T-cell (primary cell): ENCODE measurements at regions of chr1 and their contacts with region 1.

Region 1: DNA sequence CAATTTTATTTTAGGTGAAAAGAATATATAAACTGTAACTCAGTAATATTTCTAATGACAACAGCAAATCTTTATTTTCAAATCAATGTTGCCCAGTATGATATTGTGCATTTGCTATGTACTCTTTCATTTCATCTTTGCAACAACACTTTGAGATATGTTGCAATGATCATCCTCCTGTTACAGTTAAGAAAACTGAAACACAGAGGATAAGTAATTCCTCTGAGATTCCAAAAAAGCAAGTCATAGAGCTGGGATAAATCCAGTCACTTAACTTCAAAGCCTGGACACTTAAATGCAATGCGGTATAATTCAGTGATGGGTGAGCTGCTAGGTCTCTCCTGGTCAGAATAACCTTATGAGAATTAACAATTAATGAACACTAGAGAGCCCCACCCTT is 48.6 kb upstream of the EXO1 start:
- DNase-seq: no peak
- ATAC-seq: no peak
- H3K4me3 ChIP-seq: no peak overlapping the region
- H3K4me3 Mint-ChIP-seq: no peak overlapping the region
- H3K27ac ChIP-seq: no peak overlapping the region
- H3K27ac Mint-ChIP-seq: no peak overlapping the region
- H3K4me1 ChIP-seq: no peaks in the 10 kb centered on the region
- H3K4me1 Mint-ChIP-seq: no peaks in the 10 kb centered on the region
- H3K27me3 ChIP-seq: peaks cover 0 to 3% of the 10 kb centered on the region in 2 experiments
- H3K27me3 Mint-ChIP-seq: peaks cover 4 to 9% of the 10 kb centered on the region in 2 donors

Region 2: DNA sequence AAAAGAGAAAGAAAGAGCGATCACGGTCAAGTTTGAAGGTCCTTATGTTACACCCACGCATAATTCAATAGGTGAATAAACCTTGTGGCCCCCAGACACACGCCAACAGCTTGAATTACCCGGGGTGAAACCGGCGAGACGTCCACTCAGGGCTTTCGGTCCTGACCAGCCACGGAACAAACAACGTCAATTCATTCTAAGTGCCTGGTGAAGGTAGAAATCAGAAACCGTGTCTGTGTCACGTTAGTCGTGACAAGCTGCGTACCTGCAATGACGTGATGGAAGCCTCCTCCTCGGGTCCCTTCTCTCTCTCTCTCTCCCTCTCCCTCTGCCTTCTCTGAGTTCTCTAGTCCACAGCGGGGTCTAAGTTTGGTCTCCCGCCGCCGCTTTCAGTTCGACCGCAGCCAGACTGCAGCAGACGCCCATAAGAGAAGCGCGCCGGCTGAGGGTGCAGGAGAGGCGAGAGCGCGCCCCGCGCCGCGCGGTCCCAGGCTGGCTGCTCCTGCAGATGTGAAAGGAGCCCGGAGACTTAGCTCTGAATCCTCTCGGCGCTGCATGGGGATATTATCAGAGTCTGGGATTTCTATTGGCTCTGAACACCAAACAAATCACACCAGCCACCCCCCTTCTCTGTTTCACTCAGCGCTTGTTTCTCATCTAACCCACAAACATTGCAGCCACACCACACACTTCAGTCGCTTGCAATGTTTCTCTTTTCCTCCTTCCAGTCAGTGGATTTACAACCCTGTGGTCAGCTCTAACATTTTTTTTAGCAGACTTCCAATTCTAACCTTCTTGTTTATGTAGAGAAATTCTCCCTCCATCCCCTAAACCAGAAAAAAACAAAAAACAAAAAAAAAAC is 1187.6 kb before region 1 on chr1 and contains the start of gene GREM2:
- CTCF ChIA-PET with region 1: no interaction called
- POLR2A ChIA-PET with region 1: no interaction called
- DNase-seq: peak in 30 of 35 experiments; percentile 0 to 49 (median 12)
- ATAC-seq: peak; percentile 52 to 73 (median 64)
- H3K4me3 ChIP-seq: peak within 1 kb of the TSS; percentile 62
- H3K4me3 Mint-ChIP-seq: peak within 1 kb of the TSS; percentile 71 to 89 (median 88)
- H3K27ac ChIP-seq: peak within 1 kb of the TSS; percentile 50
- H3K27ac Mint-ChIP-seq: peak within 1 kb of the TSS; percentile 81 to 88
- H3K4me1 ChIP-seq: peaks cover 0 to 9% of the 10 kb centered on the region in 2 experiments
- H3K4me1 Mint-ChIP-seq: peaks cover 22 to 49% (median 42%) of the 10 kb centered on the region in 3 donors
- H3K27me3 ChIP-seq: peaks cover 6 to 15% of the 10 kb centered on the region in 2 experiments
- H3K27me3 Mint-ChIP-seq: peaks cover 15 to 32% of the 10 kb centered on the region in 2 donors
- total RNA-seq, gene GREM2: 0.23 to 2.9 (median 0.98) TPM

Region 3: GRCh38 chr1:241688940-241689368 is 110.5 kb before region 1 on chr1:
- CTCF ChIA-PET with region 1: no interaction called
- POLR2A ChIA-PET with region 1: no interaction called
- DNase-seq: no peak
- ATAC-seq: no peak
- H3K4me3 ChIP-seq: no peak overlapping the region
- H3K4me3 Mint-ChIP-seq: no peak overlapping the region
- H3K27ac ChIP-seq: no peak overlapping the region
- H3K27ac Mint-ChIP-seq: no peak overlapping the region
- H3K4me1 ChIP-seq: no peaks in the 10 kb centered on the region
- H3K4me1 Mint-ChIP-seq: peaks cover 0 to 9% (median 0%) of the 10 kb centered on the region in 3 donors
- H3K27me3 ChIP-seq: no peaks in the 10 kb centered on the region
- H3K27me3 Mint-ChIP-seq: peaks cover 0 to 7% of the 10 kb centered on the region in 2 donors

Region 4: DNA sequence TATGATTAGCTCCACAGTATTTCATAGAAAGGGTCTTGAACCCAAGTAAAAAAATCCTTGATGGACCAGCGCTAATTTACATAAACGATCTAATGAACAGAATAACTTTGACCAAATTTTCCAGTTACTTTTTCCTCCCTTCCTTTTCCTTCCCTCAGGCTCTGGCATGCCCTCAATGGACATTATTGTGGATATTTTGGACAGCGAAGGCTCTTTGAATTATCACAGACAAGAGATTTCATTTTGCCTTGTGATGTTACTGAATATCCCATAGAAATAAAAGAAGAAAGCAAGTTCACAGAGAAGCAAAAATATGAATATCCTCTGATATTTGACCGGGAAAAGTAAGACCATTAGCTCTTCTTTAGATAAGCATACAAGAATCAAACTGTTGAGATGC is 11.7 kb before region 1 on chr1:
- CTCF ChIA-PET with region 1: no interaction called
- POLR2A ChIA-PET with region 1: interaction called in 1 of 2 experiments, 26 read pairs
- DNase-seq: no peak
- ATAC-seq: no peak
- H3K4me3 ChIP-seq: no peak overlapping the region
- H3K4me3 Mint-ChIP-seq: no peak overlapping the region
- H3K27ac ChIP-seq: no peak overlapping the region
- H3K27ac Mint-ChIP-seq: no peak overlapping the region
- H3K4me1 ChIP-seq: no peaks in the 10 kb centered on the region
- H3K4me1 Mint-ChIP-seq: no peaks in the 10 kb centered on the region
- H3K27me3 ChIP-seq: no peaks in the 10 kb centered on the region
- H3K27me3 Mint-ChIP-seq: peaks cover 7 to 8% of the 10 kb centered on the region in 2 donors

Region 5: DNA sequence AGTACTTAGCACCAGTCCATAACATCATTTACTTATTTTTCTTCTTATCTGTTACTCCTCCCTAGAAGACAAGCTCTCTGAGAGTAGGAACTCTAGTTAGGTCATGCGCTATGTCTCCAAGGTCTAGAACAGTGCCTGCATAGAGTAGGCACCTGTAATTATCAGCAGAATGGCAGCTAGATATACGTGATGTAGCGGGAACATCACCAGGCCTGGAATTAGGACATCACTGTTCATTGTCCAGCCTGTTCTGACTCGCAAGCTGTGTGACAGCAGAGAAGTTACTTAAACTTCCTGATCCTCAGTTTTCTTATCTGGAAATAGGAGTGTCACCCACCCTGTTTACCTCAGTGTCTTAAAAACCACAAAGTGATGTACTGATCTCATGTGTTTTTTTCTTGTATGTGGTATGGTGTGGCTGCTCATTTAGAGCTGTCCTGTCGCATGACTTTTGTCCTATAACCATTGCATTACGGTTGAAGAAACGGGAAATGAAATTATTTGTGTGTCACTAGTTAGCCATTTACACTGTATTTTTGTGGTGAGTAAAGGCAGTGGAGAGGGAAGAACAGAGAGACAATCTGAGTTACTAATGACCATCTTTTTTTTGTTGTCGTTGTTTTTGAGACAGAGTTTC is 11.5 kb after region 1 on chr1:
- CTCF ChIA-PET with region 1: no interaction called
- POLR2A ChIA-PET with region 1: no interaction called
- DNase-seq: no peak
- ATAC-seq: no peak
- H3K4me3 ChIP-seq: no peak overlapping the region
- H3K4me3 Mint-ChIP-seq: no peak overlapping the region
- H3K27ac ChIP-seq: no peak overlapping the region
- H3K27ac Mint-ChIP-seq: no peak overlapping the region
- H3K4me1 ChIP-seq: no peaks in the 10 kb centered on the region
- H3K4me1 Mint-ChIP-seq: no peaks in the 10 kb centered on the region
- H3K27me3 ChIP-seq: peaks cover 0 to 3% of the 10 kb centered on the region in 2 experiments
- H3K27me3 Mint-ChIP-seq: peaks cover 0 to 4% of the 10 kb centered on the region in 2 donors

Region 6: DNA sequence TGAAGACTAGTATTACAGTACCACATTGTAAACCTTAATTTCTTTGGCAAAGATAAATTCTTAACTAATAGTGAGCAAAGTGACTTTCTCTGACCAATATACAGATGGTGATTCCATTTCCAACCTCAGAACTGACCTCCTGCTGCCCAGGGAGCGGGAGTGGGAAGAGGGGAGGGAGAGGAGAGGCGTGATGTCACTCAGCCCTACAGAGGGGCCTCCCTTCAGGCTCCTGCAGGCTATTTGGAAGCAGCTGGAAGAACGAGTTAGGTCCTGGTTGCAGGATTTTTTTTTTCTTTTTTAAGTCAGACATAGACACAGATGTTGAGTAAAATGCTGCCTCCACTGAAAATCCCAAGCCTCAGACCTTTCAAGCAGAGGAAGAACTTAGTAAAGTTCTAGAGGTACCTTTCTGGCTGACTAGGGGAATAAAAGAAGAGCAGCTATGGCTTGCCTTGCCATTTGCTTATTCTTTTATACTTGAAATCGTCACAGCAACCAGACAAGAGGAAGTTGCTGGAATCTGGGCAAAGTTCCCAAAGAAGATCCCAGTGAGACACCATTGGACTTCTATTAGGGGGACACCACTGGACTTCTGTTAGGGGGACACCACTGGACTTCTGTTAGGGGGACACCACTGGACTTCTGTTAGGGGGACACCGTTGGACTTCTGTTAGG is 103.1 kb after region 1 on chr1:
- CTCF ChIA-PET with region 1: no interaction called
- POLR2A ChIA-PET with region 1: no interaction called
- DNase-seq: no peak
- ATAC-seq: no peak
- H3K4me3 ChIP-seq: no peak overlapping the region
- H3K4me3 Mint-ChIP-seq: no peak overlapping the region
- H3K27ac ChIP-seq: no peak overlapping the region
- H3K27ac Mint-ChIP-seq: no peak overlapping the region
- H3K4me1 ChIP-seq: no peaks in the 10 kb centered on the region
- H3K4me1 Mint-ChIP-seq: no peaks in the 10 kb centered on the region
- H3K27me3 ChIP-seq: no peaks in the 10 kb centered on the region
- H3K27me3 Mint-ChIP-seq: no peaks in the 10 kb centered on the region